BJ (cell line): ENCODE measurements at regions of chr1 and their contacts with region 1.

Region 1: DNA sequence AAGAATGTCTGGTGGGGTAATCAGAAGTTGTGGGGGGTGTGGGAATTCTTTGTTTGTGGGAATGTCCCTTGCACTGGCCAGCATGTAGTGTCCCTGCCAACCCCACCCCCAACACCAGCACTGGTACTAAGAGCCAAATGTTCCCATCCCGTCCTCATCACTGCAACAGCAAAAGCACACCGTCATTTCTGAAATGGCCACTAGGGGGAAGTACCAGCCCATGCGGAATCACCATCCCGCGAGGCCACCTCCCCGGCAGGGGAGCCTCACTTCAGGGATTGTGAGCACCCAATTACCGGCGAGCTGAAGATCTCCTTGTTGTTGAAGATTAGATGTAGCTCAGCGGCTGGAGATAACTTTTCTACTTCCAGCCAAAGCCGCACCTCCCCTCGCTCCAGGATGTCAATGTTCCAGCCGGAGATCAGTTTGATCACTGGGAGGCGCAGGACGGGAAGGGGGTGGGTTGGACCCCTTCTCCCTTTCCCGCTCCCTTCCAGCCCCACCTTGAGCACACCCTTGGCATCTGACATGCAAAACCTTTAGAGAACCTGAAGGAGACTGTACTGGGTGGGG is 41.0 kb downstream of the MYOM3 start:
- DNase-seq: peak; percentile 9
- H3K4me3 ChIP-seq: no peak overlapping the region
- H3K27me3 ChIP-seq: peaks cover 1% of the 10 kb centered on the region
- CTCF ChIP-seq: peak; percentile 89

Region 2: DNA sequence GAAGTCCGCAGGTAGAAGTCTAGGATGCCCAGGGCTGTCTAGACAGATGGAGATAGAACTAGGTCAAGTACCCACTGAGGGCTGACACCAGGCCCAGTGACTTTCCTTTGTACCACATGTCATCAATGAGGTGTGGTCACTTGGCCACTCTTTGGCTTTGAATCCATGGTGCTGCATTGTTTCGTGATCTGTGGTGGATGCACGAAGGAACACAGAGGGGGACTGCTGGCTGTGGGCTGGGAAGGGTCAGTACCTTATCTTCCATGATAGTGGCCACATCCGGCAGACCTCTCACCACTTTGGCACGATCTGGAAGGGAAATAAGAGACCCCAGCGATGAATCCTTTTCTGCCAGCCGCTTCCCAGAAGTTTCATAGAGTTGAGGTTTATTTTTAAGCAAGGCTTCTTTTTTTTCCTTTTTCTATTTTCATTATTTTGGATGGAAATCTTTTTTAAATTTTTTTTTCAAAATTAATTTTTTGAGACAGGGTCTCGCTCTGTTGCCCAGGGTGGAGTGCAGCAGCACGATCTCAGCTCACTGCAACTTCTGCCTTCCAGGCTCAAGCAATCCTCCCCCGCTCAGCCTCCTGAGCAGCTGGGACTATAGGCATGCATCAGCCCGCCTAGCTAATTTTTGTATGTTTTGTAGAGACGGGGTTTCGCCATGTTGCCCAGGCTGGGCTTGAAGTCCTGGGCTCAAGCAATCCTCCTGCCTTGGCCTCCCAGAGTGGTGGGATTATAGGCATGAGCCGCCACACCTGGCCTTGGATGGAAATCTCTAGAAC is 12.0 kb before region 1 on chr1:
- CTCF ChIA-PET with region 1: interaction called, 16 read pairs
- POLR2A ChIA-PET with region 1: no interaction called
- DNase-seq: no peak
- H3K4me3 ChIP-seq: no peak overlapping the region
- H3K27me3 ChIP-seq: peaks cover 5% of the 10 kb centered on the region; the same call in 1 of the 2 replicates
- CTCF ChIP-seq: no peak

Region 3: DNA sequence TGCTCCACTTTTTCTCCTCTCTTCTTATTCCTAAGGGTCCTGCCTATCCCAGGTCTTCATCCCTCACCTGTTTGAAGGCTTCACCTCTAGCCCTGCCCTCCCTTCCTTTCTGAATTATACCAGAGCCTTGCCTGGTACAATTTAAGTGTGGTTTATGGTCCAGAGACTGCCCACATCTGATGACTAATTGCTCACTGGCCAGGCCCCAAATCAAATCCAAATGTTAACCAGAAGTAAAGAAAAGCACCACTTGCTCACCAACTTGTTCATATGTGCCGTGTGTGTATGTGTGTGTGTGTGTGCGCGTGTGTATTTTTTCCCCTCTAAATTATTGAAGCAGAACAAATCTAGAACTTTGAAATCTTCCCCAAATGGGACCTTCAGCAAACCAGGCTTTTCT is 14.6 kb after region 1 on chr1:
- CTCF ChIA-PET with region 1: interaction called, 52 read pairs
- POLR2A ChIA-PET with region 1: no interaction called
- DNase-seq: peak; percentile 14
- H3K4me3 ChIP-seq: no peak overlapping the region
- H3K27me3 ChIP-seq: peaks cover 13% of the 10 kb centered on the region
- CTCF ChIP-seq: no peak

Region 4: GRCh38 chr1:24096009-24096738 is 25.3 kb after region 1 on chr1:
- CTCF ChIA-PET with region 1: no interaction called
- POLR2A ChIA-PET with region 1: no interaction called
- DNase-seq: no peak
- H3K4me3 ChIP-seq: no peak overlapping the region
- H3K27me3 ChIP-seq: no peaks in the 10 kb centered on the region; the same call in none of the 2 replicates
- CTCF ChIP-seq: no peak

Region 5: GRCh38 chr1:24111996-24112779 is 41.3 kb after region 1 on chr1 and contains the start of gene MYOM3:
- CTCF ChIA-PET with region 1: interaction called, 15 read pairs
- POLR2A ChIA-PET with region 1: no interaction called
- DNase-seq: no peak
- H3K4me3 ChIP-seq: no peak within 1 kb of the TSS
- H3K27me3 ChIP-seq: 0 out of 2 replicates have a peak, but pooled peaks cover 2% of the 10 kb centered on the region
- CTCF ChIP-seq: peak; percentile 58
- polyA plus RNA-seq, gene MYOM3: 0.01 TPM in 1 of 2 replicates, not detected in the other